ENCODE measurements at regions of chr19 and their contacts with region 1.

Region 1: DNA sequence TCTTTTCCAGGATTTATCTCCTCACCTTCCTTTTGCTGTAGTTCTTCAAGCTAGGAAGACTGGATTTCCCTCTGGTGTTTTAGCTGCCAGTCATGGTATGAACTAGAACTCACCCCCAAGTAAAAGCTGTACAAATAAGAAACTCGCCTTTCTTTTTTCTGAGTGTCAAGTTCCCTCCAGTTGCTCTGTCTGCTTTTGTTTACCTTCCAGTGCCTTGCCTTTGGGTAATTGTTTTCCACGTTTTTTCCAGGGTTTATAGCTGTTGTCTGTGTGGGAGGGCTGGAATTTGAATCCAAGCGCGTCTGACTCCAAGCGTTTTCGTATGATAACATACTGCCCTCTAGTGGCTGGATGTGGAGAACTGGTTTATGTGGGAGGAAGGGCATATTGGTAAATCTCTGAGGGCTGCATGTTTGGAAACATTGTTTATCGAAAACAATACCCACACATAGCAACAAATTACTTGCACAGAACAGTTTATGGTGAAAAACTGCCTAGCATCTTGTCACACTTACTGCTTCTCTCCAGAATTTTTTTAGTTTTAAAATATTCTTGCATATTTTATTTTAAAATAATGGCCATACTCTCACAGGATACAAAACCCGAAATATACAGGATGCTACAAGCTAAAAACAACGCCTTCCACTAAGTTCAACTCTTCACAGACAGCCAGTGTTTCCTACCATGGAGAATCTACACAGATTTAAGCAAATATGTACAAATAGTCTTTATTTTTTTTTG is 19.2 kb downstream of the RCN3 start:
- DNase-seq: peak; percentile 80 to 89 (median 85)
- H3K4me3 ChIP-seq: no peak overlapping the region
- H3K27ac ChIP-seq: no peak overlapping the region
- H3K4me1 ChIP-seq: peaks cover 0 to 8% (median 2%) of the 10 kb centered on the region in 4 experiments
- H3K27me3 ChIP-seq: no peaks in the 10 kb centered on the region

Region 2: GRCh38 chr19:49512970-49513745 is 33.8 kb before region 1 on chr19:
- CTCF ChIA-PET with region 1: interaction called, 15 read pairs
- POLR2A ChIA-PET with region 1: no interaction called
- DNase-seq: peak in 1 of 3 donors; percentile 29
- H3K4me3 ChIP-seq: peak overlapping the region; percentile 38 to 81 (median 63)
- H3K27ac ChIP-seq: no peak overlapping the region
- H3K4me1 ChIP-seq: peaks cover 0 to 62% (median 39%) of the 10 kb centered on the region in 4 experiments
- H3K27me3 ChIP-seq: peaks cover 0 to 2% (median 0%) of the 10 kb centered on the region in 5 experiments

Region 3: DNA sequence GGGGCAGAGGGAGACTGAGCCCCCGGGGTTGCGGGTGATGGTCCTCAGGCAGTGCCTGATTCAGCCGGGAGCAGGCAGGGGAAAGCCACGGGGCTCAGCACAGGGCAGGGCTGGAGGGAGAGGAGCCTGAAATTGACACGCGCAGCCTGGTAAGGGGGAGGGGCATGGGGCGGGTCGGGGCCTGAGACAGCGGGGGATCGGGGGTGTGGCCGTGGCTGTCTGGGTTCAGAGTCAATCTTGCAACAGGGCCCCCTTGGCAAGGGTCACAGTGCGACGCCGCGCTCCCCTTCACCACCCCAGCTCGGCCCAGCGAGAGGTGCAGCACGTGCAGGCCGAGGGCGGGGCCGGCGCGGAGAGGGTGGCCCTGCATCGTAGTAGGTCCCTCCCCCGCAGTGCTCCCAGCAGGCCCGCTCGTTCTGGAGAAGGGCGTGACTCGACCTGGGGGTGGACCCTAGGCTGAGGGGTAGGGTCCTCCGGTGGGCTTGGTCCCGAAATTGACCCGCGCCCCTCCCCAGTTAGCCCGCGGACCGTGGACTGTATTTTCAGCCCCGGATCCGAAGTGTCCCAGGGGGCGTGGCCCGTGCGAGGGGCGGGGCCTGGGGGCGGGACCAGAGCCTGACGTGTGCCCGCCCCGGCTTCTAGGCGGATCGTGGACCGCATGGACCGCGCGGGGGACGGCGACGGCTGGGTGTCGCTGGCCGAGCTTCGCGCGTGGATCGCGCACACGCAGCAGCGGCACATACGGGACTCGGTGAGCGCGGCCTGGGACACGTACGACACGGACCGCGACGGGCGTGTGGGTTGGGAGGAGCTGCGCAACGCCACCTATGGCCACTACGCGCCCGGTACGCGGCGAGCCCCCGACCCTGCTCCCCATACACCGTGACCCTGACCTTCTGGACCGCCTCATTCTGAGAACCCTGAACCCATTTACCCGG is 13.2 kb before region 1 on chr19:
- CTCF ChIA-PET with region 1: interaction called, 48 read pairs
- POLR2A ChIA-PET with region 1: no interaction called
- DNase-seq: peak; percentile 59 to 75 (median 66)
- H3K4me3 ChIP-seq: peak overlapping the region; percentile 15 to 71 (median 60)
- H3K27ac ChIP-seq: no peak overlapping the region
- H3K4me1 ChIP-seq: peaks cover 5 to 42% (median 41%) of the 10 kb centered on the region in 4 experiments
- H3K27me3 ChIP-seq: peaks cover 0 to 28% (median 5%) of the 10 kb centered on the region in 5 experiments

Region 4: GRCh38 chr19:49614096-49614833 is 67.3 kb after region 1 on chr19:
- CTCF ChIA-PET with region 1: no interaction called
- POLR2A ChIA-PET with region 1: no interaction called
- DNase-seq: peak in 2 of 3 donors; percentile 13 to 19
- H3K4me3 ChIP-seq: no peak overlapping the region
- H3K27ac ChIP-seq: peak overlapping the region in 1 of 2 experiments; percentile 14
- H3K4me1 ChIP-seq: no peaks in the 10 kb centered on the region
- H3K27me3 ChIP-seq: no peaks in the 10 kb centered on the region

Region 5: GRCh38 chr19:49664171-49665035 is 117.4 kb after region 1 on chr19:
- CTCF ChIA-PET with region 1: no interaction called
- POLR2A ChIA-PET with region 1: no interaction called
- DNase-seq: peak; percentile 63 to 79 (median 78)
- H3K4me3 ChIP-seq: peak overlapping the region; percentile 84 to 99 (median 96)
- H3K27ac ChIP-seq: peak overlapping the region; percentile 55 to 89
- H3K4me1 ChIP-seq: peaks cover 3 to 34% (median 30%) of the 10 kb centered on the region in 4 experiments
- H3K27me3 ChIP-seq: no peaks in the 10 kb centered on the region